CD8-positive, alpha-beta T cell (primary cell): ENCODE measurements at regions of chr4 and their contacts with region 1.

Region 1: DNA sequence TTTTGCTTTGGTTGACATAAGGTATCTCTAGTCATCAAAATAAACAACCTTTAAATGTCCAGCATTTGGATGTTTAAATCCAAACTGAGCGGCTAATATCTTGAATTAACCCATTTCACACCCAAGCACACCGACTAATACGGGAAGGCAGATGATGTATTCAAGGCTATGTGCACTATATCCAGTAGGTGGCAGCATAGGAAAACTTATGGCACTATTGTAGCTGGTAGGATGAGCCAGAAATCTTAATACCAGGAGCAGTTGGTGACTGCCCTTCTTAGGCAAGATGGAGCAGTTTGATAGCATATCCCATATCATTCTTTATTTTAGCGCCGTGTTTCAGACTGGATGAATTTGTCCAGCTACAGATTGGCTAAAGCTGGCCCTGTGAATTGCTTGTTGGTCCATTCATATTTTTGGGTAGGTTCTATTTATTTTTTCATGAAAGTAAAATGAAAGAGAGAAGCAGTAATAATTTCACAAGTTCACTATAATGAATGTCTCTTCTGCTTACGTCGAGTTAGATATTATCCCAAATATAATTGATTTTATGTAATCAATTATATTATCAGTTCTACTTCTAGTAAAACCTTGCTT is 24.4 kb downstream of the UCHL1 start:
- DNase-seq: peak in 3 of 9 experiments; percentile 13 to 63 (median 46)
- ATAC-seq: peak; percentile 57
- H3K4me3 ChIP-seq: no peak overlapping the region
- H3K4me3 Mint-ChIP-seq: no peak overlapping the region
- H3K27ac ChIP-seq: no peak overlapping the region
- H3K27ac Mint-ChIP-seq: no peak overlapping the region
- H3K4me1 ChIP-seq: no peaks in the 10 kb centered on the region
- H3K4me1 Mint-ChIP-seq: no peaks in the 10 kb centered on the region
- H3K27me3 ChIP-seq: no peaks in the 10 kb centered on the region
- H3K27me3 Mint-ChIP-seq: peaks cover 13% of the 10 kb centered on the region
- CTCF ChIP-seq: peak; percentile 76

Region 2: DNA sequence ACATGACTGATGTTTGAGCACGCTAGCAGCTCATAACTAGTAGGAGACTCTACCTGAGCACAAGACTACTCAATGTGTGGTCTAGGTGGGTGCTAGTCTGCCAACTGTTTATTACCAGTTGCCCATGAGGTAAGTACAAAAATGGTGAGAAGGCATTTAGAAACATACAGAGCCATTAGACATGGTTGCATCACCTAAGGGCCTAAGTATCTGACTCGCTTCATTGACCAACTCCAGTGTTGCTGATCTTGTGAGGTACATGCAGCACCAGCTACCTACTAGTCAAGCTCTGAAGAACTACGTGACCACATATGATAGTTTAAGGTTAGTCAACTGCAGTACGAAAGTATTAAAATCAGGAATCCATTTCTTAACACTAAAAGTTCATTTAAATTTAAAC is 106.7 kb before region 1 on chr4:
- CTCF ChIA-PET with region 1: no interaction called
- POLR2A ChIA-PET with region 1: no interaction called
- intact Hi-C with region 1: no loop called
- DNase-seq: no peak
- ATAC-seq: no peak
- H3K4me3 ChIP-seq: no peak overlapping the region
- H3K4me3 Mint-ChIP-seq: no peak overlapping the region
- H3K27ac ChIP-seq: no peak overlapping the region
- H3K27ac Mint-ChIP-seq: no peak overlapping the region
- H3K4me1 ChIP-seq: no peaks in the 10 kb centered on the region
- H3K4me1 Mint-ChIP-seq: no peaks in the 10 kb centered on the region
- H3K27me3 ChIP-seq: no peaks in the 10 kb centered on the region
- H3K27me3 Mint-ChIP-seq: no peaks in the 10 kb centered on the region
- CTCF ChIP-seq: no peak

Region 3: DNA sequence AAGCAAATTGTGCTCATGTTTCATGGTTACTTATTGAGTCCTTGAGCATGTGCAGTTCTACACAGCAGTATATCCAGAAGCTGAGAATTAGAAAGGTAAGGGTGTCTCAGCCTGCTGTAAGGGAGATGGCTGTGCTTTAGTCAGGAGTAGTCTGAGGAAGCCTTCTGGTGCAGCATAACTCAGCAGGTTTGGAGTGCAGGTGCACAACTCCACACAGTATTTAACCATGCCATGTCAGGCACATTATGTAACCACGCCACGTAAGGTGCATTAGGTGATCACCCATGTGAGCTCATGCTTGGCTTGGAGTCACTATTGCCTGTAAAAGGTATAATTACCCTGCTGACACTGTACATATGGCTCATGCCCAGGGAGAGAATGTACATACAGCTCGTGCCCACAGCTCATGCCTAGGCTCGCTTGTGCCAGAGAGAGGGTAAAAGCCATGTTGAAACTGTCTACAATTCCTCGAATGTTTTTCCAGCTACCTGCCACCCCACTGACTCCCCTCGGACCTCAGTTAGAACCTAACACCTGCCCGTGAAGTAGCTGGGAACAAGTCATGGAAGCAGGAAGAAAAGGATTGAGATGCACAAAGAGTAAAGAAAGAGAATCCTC is 13.4 kb after region 1 on chr4:
- CTCF ChIA-PET with region 1: interaction called, 15 read pairs
- POLR2A ChIA-PET with region 1: no interaction called
- intact Hi-C with region 1: no loop called
- DNase-seq: peak in 2 of 9 experiments; percentile 6 to 38
- ATAC-seq: no peak
- H3K4me3 ChIP-seq: no peak overlapping the region
- H3K4me3 Mint-ChIP-seq: no peak overlapping the region
- H3K27ac ChIP-seq: no peak overlapping the region
- H3K27ac Mint-ChIP-seq: no peak overlapping the region
- H3K4me1 ChIP-seq: no peaks in the 10 kb centered on the region
- H3K4me1 Mint-ChIP-seq: no peaks in the 10 kb centered on the region
- H3K27me3 ChIP-seq: no peaks in the 10 kb centered on the region
- H3K27me3 Mint-ChIP-seq: peaks cover under 1% of the 10 kb centered on the region
- CTCF ChIP-seq: no peak

Region 4: GRCh38 chr4:41661442-41662076 is 380.4 kb after region 1 on chr4:
- CTCF ChIA-PET with region 1: interaction called, 4 read pairs
- POLR2A ChIA-PET with region 1: no interaction called
- intact Hi-C with region 1: loop called in 1 of 2 experiments (anchors 5 kb)
- DNase-seq: peak in 7 of 9 experiments; percentile 6 to 31 (median 17)
- ATAC-seq: no peak
- H3K4me3 ChIP-seq: no peak overlapping the region
- H3K4me3 Mint-ChIP-seq: no peak overlapping the region
- H3K27ac ChIP-seq: no peak overlapping the region
- H3K27ac Mint-ChIP-seq: no peak overlapping the region
- H3K4me1 ChIP-seq: no peaks in the 10 kb centered on the region
- H3K4me1 Mint-ChIP-seq: no peaks in the 10 kb centered on the region
- H3K27me3 ChIP-seq: no peaks in the 10 kb centered on the region
- H3K27me3 Mint-ChIP-seq: peaks cover 5% of the 10 kb centered on the region
- CTCF ChIP-seq: peak; percentile 87

Region 5: GRCh38 chr4:41882625-41883347 is 601.6 kb after region 1 on chr4:
- CTCF ChIA-PET with region 1: interaction called, 12 read pairs
- POLR2A ChIA-PET with region 1: no interaction called
- intact Hi-C with region 1: loop called (anchors 1 kb)
- DNase-seq: peak; percentile 24 to 71 (median 49)
- ATAC-seq: peak; percentile 93
- H3K4me3 ChIP-seq: peak overlapping the region; percentile 38 to 52
- H3K4me3 Mint-ChIP-seq: peak overlapping the region; percentile 78
- H3K27ac ChIP-seq: no peak overlapping the region
- H3K27ac Mint-ChIP-seq: no peak overlapping the region
- H3K4me1 ChIP-seq: peaks cover 21% of the 10 kb centered on the region
- H3K4me1 Mint-ChIP-seq: peaks cover 26% of the 10 kb centered on the region
- H3K27me3 ChIP-seq: peaks cover 27% of the 10 kb centered on the region in 2 experiments
- H3K27me3 Mint-ChIP-seq: peaks cover 63% of the 10 kb centered on the region
- CTCF ChIP-seq: peak; percentile 99

Region 6: GRCh38 chr4:41887821-41888686 is 606.9 kb after region 1 on chr4:
- CTCF ChIA-PET with region 1: interaction called, 12 read pairs
- POLR2A ChIA-PET with region 1: no interaction called
- intact Hi-C with region 1: loop called in 1 of 2 experiments (anchors 1 kb)
- DNase-seq: peak in 7 of 9 experiments; percentile 17 to 63 (median 47)
- ATAC-seq: no peak
- H3K4me3 ChIP-seq: no peak overlapping the region
- H3K4me3 Mint-ChIP-seq: no peak overlapping the region
- H3K27ac ChIP-seq: no peak overlapping the region
- H3K27ac Mint-ChIP-seq: no peak overlapping the region
- H3K4me1 ChIP-seq: no peaks in the 10 kb centered on the region
- H3K4me1 Mint-ChIP-seq: no peaks in the 10 kb centered on the region
- H3K27me3 ChIP-seq: no peaks in the 10 kb centered on the region
- H3K27me3 Mint-ChIP-seq: peaks cover 28% of the 10 kb centered on the region
- CTCF ChIP-seq: peak; percentile 99

Region 7: DNA sequence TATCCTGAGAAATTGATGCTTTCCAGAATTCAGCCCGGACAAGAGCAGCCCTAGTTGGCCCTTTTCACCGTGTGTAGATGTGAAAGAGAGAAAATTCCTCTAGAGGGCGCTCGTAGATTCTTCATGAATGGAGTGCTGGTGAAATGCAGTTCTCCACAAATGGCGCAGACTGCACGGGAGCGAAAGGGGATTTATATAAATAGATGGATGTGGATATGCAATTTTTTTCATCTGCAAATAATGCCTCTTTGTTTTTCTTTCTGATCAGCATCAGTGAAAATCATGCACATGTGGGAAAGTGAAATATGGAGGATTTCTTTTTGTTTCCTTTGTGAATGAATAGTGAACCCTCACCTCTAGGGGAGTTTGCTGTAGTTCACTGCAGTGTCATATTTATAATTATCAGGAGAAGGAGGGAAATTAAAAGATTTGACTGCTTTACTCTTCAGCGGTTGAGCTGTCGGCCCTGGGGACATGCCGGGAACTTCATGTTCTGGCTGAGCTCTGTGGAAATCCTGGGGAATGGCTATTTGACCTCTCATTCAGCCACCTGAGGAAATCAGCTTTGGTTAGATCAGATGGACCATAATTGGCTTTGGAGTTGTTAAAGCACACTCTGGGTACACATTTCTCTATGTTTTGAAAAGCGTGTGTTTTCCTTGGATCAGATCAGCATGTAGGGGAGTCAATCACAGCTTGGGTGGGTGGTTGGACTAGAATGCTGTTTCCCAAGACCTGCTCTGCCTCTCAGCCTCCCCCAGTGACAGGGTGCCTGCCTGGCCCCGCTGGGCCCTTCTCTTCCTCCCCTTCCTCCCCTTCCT is 1001.2 kb after region 1 on chr4:
- CTCF ChIA-PET with region 1: no interaction called
- POLR2A ChIA-PET with region 1: no interaction called
- intact Hi-C with region 1: loop called in 1 of 2 experiments (anchors 10 kb)
- DNase-seq: peak in 4 of 9 experiments; percentile 3 to 60 (median 29)
- ATAC-seq: no peak
- H3K4me3 ChIP-seq: no peak overlapping the region
- H3K4me3 Mint-ChIP-seq: peak overlapping the region; percentile 1
- H3K27ac ChIP-seq: no peak overlapping the region
- H3K27ac Mint-ChIP-seq: no peak overlapping the region
- H3K4me1 ChIP-seq: no peaks in the 10 kb centered on the region
- H3K4me1 Mint-ChIP-seq: peaks cover 8% of the 10 kb centered on the region
- H3K27me3 ChIP-seq: peaks cover 0 to 3% of the 10 kb centered on the region in 2 experiments
- H3K27me3 Mint-ChIP-seq: peaks cover 16% of the 10 kb centered on the region
- CTCF ChIP-seq: peak; percentile 60

Region 8: GRCh38 chr4:42519803-42520417 is 1238.8 kb after region 1 on chr4:
- CTCF ChIA-PET with region 1: no interaction called
- POLR2A ChIA-PET with region 1: no interaction called
- intact Hi-C with region 1: loop called in 1 of 2 experiments (anchors 5 kb)
- DNase-seq: peak in 6 of 9 experiments; percentile 5 to 63 (median 46)
- ATAC-seq: peak; percentile 73
- H3K4me3 ChIP-seq: no peak overlapping the region
- H3K4me3 Mint-ChIP-seq: no peak overlapping the region
- H3K27ac ChIP-seq: no peak overlapping the region
- H3K27ac Mint-ChIP-seq: no peak overlapping the region
- H3K4me1 ChIP-seq: no peaks in the 10 kb centered on the region
- H3K4me1 Mint-ChIP-seq: peaks cover 3% of the 10 kb centered on the region
- H3K27me3 ChIP-seq: no peaks in the 10 kb centered on the region
- H3K27me3 Mint-ChIP-seq: no peaks in the 10 kb centered on the region
- CTCF ChIP-seq: peak; percentile 82